ENCODE measurements at regions of chr6 and their contacts with region 1.

Region 1: DNA sequence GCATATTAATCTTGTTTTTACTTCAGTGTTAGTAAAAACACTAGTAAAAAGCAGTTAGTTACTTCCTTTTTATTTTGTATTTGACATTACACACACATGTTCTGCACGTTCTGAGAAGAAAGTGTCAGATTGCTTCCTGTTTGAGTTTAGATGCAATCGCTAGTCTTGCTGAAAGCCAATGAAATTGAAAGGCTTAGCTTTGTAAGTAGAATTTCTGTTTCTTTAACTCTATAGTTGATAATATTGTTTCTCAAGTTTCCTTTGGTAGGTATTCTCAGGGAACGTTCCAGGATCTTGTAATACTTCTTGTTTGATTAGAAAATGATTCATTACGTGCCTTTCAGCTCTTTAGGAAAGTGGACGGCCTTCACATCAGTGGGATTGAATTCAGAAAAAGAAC is 55.0 kb downstream of the CDKAL1 start:
- DNase-seq: no peak
- H3K4me3 Mint-ChIP-seq: no peak overlapping the region
- H3K27ac Mint-ChIP-seq: no peak overlapping the region
- H3K4me1 Mint-ChIP-seq: peaks cover 17% of the 10 kb centered on the region
- H3K27me3 Mint-ChIP-seq: no peaks in the 10 kb centered on the region

Region 2: DNA sequence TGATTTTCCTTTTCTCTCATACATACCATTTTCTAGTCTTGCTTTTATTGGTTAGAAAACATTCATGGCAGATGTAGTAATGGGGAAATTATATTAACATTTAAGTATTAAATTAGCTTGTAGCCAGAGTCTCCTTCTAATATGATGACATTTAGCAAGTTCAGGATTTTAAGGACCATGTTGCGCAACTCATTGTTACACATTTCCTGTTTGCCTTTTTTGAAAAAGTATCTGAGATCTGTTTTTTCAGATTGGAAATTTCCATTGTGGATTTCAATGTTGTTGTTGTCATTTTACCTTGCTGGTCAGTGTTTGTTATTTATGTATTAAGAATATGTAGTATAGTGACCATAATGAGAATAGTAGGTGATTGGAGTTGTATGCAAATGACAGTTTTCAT is 16.3 kb before region 1 on chr6:
- CTCF ChIA-PET with region 1: no interaction called
- POLR2A ChIA-PET with region 1: no interaction called
- intact Hi-C with region 1: no loop called
- DNase-seq: no peak
- H3K4me3 Mint-ChIP-seq: no peak overlapping the region
- H3K27ac Mint-ChIP-seq: no peak overlapping the region
- H3K4me1 Mint-ChIP-seq: peaks cover 25% of the 10 kb centered on the region
- H3K27me3 Mint-ChIP-seq: no peaks in the 10 kb centered on the region

Region 3: GRCh38 chr6:20680697-20681165 is 91.5 kb after region 1 on chr6:
- CTCF ChIA-PET with region 1: no interaction called
- POLR2A ChIA-PET with region 1: no interaction called
- intact Hi-C with region 1: no loop called
- DNase-seq: no peak
- H3K4me3 Mint-ChIP-seq: no peak overlapping the region
- H3K27ac Mint-ChIP-seq: no peak overlapping the region
- H3K4me1 Mint-ChIP-seq: peaks cover 18% of the 10 kb centered on the region
- H3K27me3 Mint-ChIP-seq: no peaks in the 10 kb centered on the region

Region 4: GRCh38 chr6:20811109-20811746 is 222.0 kb after region 1 on chr6:
- CTCF ChIA-PET with region 1: no interaction called
- POLR2A ChIA-PET with region 1: no interaction called
- intact Hi-C with region 1: no loop called
- DNase-seq: peak; percentile 14
- H3K4me3 Mint-ChIP-seq: no peak overlapping the region
- H3K27ac Mint-ChIP-seq: no peak overlapping the region
- H3K4me1 Mint-ChIP-seq: no peaks in the 10 kb centered on the region
- H3K27me3 Mint-ChIP-seq: no peaks in the 10 kb centered on the region

Region 5: GRCh38 chr6:20846602-20847028 is 257.3 kb after region 1 on chr6:
- CTCF ChIA-PET with region 1: no interaction called
- POLR2A ChIA-PET with region 1: no interaction called
- intact Hi-C with region 1: loop called (anchors 10 kb)
- DNase-seq: peak; percentile 19
- H3K4me3 Mint-ChIP-seq: no peak overlapping the region
- H3K27ac Mint-ChIP-seq: no peak overlapping the region
- H3K4me1 Mint-ChIP-seq: peaks cover 13% of the 10 kb centered on the region
- H3K27me3 Mint-ChIP-seq: no peaks in the 10 kb centered on the region

Region 6: DNA sequence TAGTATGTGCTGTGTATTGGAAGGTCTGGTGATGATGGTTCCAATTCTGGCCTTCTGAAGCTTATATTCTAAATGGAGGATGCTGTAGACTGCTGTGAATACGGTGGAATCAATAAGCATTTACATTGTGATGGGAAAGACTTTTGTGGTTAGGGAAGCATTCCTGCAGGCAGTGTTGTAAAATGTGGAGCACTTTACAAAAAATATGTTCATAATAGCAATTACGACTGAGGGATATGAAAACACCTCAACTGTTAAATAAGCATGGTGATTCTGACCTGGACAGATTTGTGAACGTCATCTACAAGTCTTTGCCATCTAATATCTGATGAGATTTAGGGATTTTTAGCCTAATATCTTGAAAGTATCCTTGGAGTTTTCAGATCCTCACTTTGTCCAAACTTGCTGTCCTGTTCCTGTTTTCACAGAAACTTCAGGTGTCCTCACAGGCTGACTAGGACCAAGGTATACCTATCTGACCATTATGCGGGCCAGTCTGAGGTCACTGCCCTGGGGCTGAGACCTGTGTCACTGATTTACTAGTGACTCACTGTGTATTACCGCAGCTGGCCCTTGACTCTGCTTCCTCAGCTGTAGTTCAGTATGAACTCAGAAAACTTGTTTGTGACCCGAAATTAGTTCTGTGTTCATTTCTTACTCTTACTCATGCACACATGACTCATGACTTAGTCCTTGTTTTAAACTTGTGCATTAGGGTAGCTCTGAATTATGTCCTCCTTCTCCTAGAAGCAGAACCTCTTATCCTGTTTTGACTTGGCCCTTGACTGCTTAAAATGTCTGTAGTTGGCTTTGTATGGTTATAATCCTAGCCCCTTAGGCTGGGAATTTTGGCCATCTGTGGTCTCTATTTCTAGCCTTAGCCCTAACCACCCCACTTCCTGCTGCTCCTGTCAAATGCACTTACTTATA is 288.0 kb after region 1 on chr6:
- CTCF ChIA-PET with region 1: no interaction called
- POLR2A ChIA-PET with region 1: no interaction called
- intact Hi-C with region 1: loop called (anchors 10 kb)
- DNase-seq: peak; percentile 65
- H3K4me3 Mint-ChIP-seq: no peak overlapping the region
- H3K27ac Mint-ChIP-seq: peak overlapping the region; percentile 65
- H3K4me1 Mint-ChIP-seq: peaks cover 18% of the 10 kb centered on the region
- H3K27me3 Mint-ChIP-seq: no peaks in the 10 kb centered on the region

Region 7: GRCh38 chr6:21992178-21992967 is 1403.1 kb after region 1 on chr6:
- CTCF ChIA-PET with region 1: no interaction called
- POLR2A ChIA-PET with region 1: no interaction called
- intact Hi-C with region 1: no loop called
- DNase-seq: no peak
- H3K4me3 Mint-ChIP-seq: no peak overlapping the region
- H3K27ac Mint-ChIP-seq: no peak overlapping the region
- H3K4me1 Mint-ChIP-seq: no peaks in the 10 kb centered on the region
- H3K27me3 Mint-ChIP-seq: peaks cover 4% of the 10 kb centered on the region